ENCODE measurements at regions of chr4 and their contacts with region 1.

Region 1: GRCh38 chr4:184263910-184264732 is 46.4 kb upstream of the ENPP6 start:
- DNase-seq: peak; percentile 80 to 90 (median 87)
- ATAC-seq: peak; percentile 86
- H3K4me3 ChIP-seq: no peak overlapping the region
- H3K4me3 Mint-ChIP-seq: peak overlapping the region in 1 of 10 donors; percentile 17
- H3K27ac ChIP-seq: no peak overlapping the region
- H3K27ac Mint-ChIP-seq: peak overlapping the region in 6 of 9 donors; percentile 5 to 72 (median 63)
- H3K4me1 ChIP-seq: peaks cover 6 to 14% of the 10 kb centered on the region in 2 donors
- H3K4me1 Mint-ChIP-seq: peaks cover 5 to 54% (median 28%) of the 10 kb centered on the region in 7 donors
- H3K27me3 ChIP-seq: no peaks in the 10 kb centered on the region
- H3K27me3 Mint-ChIP-seq: peaks cover 0 to 2% (median 0%) of the 10 kb centered on the region in 5 donors

Region 2: DNA sequence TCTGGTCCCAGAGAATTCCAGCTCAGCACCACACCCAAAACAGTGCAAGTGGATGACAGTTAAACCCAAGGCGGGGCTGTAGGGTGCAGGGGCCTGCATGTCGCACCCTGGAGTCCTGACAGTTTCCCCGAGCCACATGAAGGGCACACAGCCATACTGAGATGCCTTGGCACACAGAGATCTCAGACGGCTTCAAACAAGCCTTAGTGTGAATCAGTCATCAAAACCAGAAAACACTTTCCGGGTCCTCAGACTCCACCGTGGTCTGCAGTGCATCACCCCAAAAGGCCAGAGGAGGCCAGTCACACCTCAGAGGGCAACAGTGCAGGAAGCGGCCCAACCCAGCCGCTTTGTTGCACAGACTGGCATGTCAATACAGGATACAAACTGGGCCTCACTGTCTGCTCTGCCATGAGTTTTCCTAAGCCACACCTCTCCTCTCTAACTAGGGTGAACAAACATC is 18.2 kb after region 1 on chr4:
- CTCF ChIA-PET with region 1: interaction called, 6 read pairs
- POLR2A ChIA-PET with region 1: interaction called, 17 read pairs
- intact Hi-C with region 1: loop called (anchors 1 kb)
- DNase-seq: peak in 5 of 9 donors; percentile 8 to 56 (median 25)
- ATAC-seq: peak; percentile 75
- H3K4me3 ChIP-seq: no peak overlapping the region
- H3K4me3 Mint-ChIP-seq: peak overlapping the region in 2 of 10 donors; percentile 1 to 25
- H3K27ac ChIP-seq: no peak overlapping the region
- H3K27ac Mint-ChIP-seq: peak overlapping the region in 8 of 9 donors; percentile 17 to 90 (median 64)
- H3K4me1 ChIP-seq: peaks cover 24 to 35% of the 10 kb centered on the region in 2 donors
- H3K4me1 Mint-ChIP-seq: peaks cover 22 to 50% (median 38%) of the 10 kb centered on the region in 7 donors
- H3K27me3 ChIP-seq: no peaks in the 10 kb centered on the region
- H3K27me3 Mint-ChIP-seq: no peaks in the 10 kb centered on the region

Region 3: DNA sequence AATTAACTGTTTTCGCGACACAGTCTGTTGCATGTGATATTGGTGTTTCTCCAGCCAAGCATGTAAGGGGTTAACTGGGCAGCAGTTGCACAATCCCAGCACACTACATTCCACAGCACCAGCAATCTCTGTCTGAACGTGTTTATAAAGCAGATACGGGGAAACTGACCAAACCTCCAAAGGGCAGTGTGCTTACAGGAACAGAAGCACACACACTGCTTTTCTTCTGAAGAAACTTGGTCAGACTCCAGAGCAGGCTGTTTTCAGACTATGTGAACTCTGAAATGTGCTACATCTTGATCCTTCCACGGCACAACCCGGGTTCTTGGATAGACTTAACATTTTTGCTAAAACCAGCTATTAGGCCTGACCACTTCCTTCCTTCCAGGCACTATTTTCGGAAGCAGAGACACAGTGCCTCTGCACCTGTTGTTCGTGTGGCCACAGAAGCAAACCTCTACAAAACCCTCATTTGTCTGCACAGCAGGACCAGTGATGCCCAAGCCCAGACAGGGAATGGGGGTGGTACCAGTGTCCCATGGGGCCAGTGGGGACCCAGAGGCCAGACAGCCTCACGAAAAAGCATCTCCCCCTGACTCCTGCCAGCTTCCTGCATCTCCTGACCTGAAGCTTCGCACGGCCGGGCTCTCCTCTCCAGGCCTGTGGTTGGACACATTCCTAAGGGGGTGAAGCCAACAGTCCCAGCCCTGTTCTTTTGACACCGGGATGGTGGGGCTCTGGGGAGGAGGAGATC is 120.1 kb after region 1 on chr4:
- CTCF ChIA-PET with region 1: interaction called, 5 read pairs
- POLR2A ChIA-PET with region 1: interaction called, 6 read pairs
- intact Hi-C with region 1: loop called (anchors 2 kb)
- DNase-seq: peak in 1 of 9 donors; percentile 3
- ATAC-seq: peak; percentile 26
- H3K4me3 ChIP-seq: no peak overlapping the region
- H3K4me3 Mint-ChIP-seq: peak overlapping the region in 9 of 10 donors; percentile 8 to 68 (median 29)
- H3K27ac ChIP-seq: no peak overlapping the region
- H3K27ac Mint-ChIP-seq: peak overlapping the region in 8 of 9 donors; percentile 3 to 86 (median 60)
- H3K4me1 ChIP-seq: peaks cover 24 to 40% of the 10 kb centered on the region in 2 donors
- H3K4me1 Mint-ChIP-seq: peaks cover 41 to 73% (median 63%) of the 10 kb centered on the region in 7 donors
- H3K27me3 ChIP-seq: no peaks in the 10 kb centered on the region
- H3K27me3 Mint-ChIP-seq: no peaks in the 10 kb centered on the region

Region 4: DNA sequence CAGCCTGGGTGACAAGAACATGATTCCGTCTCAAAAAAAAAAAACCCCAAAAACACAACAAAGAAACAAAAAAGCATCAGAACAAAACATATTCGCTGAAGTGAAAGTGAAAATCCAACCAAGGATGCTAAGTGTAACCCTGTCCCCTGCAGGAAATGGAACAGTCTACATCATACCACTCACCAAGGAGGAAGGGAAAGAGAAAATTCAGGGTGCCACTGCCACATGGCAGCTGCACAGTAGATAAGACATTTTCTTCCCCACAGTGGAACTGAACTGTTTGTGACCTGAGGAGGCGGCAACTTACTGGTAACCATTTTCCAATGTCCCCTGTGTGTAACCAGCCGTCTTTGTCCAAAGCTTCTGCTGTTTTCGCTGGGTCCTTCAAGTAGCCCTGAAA is 498.0 kb after region 1 on chr4:
- CTCF ChIA-PET with region 1: interaction called, 4 read pairs
- POLR2A ChIA-PET with region 1: interaction called, 3 read pairs
- intact Hi-C with region 1: loop called in 1 of 2 experiments (anchors 1 kb)
- DNase-seq: peak in 8 of 9 donors; percentile 38 to 84 (median 75)
- ATAC-seq: peak; percentile 96
- H3K4me3 ChIP-seq: no peak overlapping the region
- H3K4me3 Mint-ChIP-seq: peak overlapping the region; percentile 6 to 78 (median 66)
- H3K27ac ChIP-seq: peak overlapping the region; percentile 36
- H3K27ac Mint-ChIP-seq: peak overlapping the region; percentile 83 to 94 (median 87)
- H3K4me1 ChIP-seq: peaks cover 5 to 14% of the 10 kb centered on the region in 2 donors
- H3K4me1 Mint-ChIP-seq: peaks cover 0 to 23% (median 20%) of the 10 kb centered on the region in 7 donors
- H3K27me3 ChIP-seq: no peaks in the 10 kb centered on the region
- H3K27me3 Mint-ChIP-seq: no peaks in the 10 kb centered on the region

Region 5: GRCh38 chr4:185005216-185005819 is 741.2 kb after region 1 on chr4:
- CTCF ChIA-PET with region 1: no interaction called
- POLR2A ChIA-PET with region 1: no interaction called
- intact Hi-C with region 1: loop called in 1 of 2 experiments (anchors 1 kb)
- DNase-seq: peak; percentile 45 to 78 (median 66)
- ATAC-seq: peak; percentile 93
- H3K4me3 ChIP-seq: peak overlapping the region; percentile 2
- H3K4me3 Mint-ChIP-seq: peak overlapping the region; percentile 25 to 71 (median 60)
- H3K27ac ChIP-seq: no peak overlapping the region
- H3K27ac Mint-ChIP-seq: peak overlapping the region in 1 of 9 donors; percentile 8
- H3K4me1 ChIP-seq: peaks cover 0 to 3% of the 10 kb centered on the region in 2 donors
- H3K4me1 Mint-ChIP-seq: peaks cover 6 to 9% (median 7%) of the 10 kb centered on the region in 7 donors
- H3K27me3 ChIP-seq: no peaks in the 10 kb centered on the region
- H3K27me3 Mint-ChIP-seq: peaks cover 47 to 54% (median 52%) of the 10 kb centered on the region in 5 donors

Region 6: DNA sequence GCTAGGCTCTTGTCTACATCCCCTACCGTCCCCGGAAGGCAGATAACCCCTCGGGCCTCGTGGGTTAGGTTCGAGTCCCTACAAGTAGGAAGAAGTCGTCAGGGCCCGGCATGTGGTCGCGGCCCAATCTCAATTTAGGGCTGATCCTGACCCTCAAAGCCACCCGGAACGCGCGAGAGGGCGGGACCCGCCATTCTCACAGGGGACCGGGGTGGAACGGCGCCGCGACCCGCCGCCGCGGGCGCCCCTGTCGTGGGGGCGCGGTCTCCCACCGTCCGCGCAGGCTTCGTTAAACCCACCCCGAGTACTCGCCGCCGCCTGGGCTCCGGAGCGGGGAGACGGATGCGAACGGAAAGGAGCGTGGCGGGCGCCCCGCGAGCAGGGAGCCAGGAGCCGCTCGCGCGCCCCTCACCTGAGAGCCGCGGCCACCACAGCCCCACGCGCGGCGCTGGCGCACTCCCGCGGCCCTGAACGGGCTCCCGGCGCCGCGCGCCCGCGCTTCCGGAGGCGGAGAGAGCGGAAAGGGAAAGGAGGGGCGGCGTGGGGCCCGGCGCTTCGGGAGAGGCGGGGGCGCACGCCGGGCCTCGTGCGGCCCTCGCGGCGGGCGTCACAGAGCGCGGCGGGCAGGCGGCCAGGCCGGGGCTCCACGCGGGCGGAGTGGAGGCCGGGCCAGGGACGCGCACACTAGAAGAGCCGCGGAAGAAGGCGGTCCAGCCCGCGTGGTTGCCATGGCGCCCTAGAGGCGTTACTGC is 939.5 kb after region 1 on chr4 and contains the start of gene CFAP97:
- CTCF ChIA-PET with region 1: no interaction called
- POLR2A ChIA-PET with region 1: no interaction called
- intact Hi-C with region 1: loop called (anchors 5 to 10 kb)
- DNase-seq: peak; percentile 78 to 90 (median 85)
- ATAC-seq: peak; percentile 89
- H3K4me3 ChIP-seq: peak within 1 kb of the TSS; percentile 64
- H3K4me3 Mint-ChIP-seq: peak within 1 kb of the TSS; percentile 87 to 99 (median 96)
- H3K27ac ChIP-seq: peak within 1 kb of the TSS; percentile 75
- H3K27ac Mint-ChIP-seq: peak within 1 kb of the TSS; percentile 95 to 99 (median 98)
- H3K4me1 ChIP-seq: peaks cover 22% of the 10 kb centered on the region in 2 donors
- H3K4me1 Mint-ChIP-seq: peaks cover 28 to 60% (median 53%) of the 10 kb centered on the region in 7 donors
- H3K27me3 ChIP-seq: no peaks in the 10 kb centered on the region
- H3K27me3 Mint-ChIP-seq: peaks cover 0 to 3% (median 0%) of the 10 kb centered on the region in 5 donors
- total RNA-seq, gene CFAP97: 23.6 to 46.5 (median 38.0) TPM

Measured in naive thymus-derived CD4-positive, alpha-beta T cell (primary cell).